Left cardiac atrium (tissue), 4 donors: ENCODE measurements at regions of chr3 and their contacts with region 1.

Region 1: GRCh38 chr3:185824476-185825378 is at the start of gene IGF2BP2:
- DNase-seq: peak; percentile 74
- ATAC-seq: peak; percentile 81 to 87
- total RNA-seq, gene IGF2BP2: 12.8 to 14.2 TPM

Region 2: DNA sequence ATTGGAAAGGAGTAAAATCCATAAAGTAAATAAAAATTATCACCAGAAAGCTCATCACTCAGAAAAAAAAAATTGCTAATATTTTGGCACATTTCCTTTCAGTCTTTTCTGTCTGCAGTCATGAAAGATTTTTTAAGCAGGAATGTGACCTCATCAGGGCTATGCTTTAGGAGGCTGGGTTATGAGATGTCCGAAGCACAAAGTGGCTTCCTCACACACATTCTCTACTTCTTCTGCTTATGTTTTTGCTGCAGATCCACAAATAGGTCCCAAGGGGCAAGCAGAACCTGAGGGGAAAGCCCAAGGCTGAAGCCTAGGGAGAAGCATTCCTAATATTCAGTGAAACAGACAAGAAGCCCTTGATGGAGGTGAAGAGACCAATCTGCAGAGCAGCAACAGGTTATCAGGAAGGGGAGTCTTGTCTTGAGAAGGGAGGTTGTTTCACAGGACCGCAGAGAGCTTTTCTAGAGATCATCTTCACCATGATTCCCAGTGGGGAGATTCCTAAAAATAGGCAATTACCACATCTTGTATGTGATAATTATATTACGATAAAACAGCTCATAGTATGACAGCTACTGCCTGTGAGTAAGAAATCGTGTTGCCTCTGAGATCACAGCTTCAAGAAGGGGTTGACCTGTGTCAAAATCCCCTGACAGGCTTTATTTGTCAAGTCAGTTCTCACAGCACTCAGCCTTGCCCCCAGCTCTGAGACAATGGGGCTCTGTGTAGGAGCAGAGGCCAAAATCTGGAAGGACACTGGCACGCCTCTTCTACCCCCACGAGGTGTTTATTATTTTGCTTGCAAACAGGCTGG is 60.4 kb before region 1 on chr3:
- intact Hi-C with region 1: no loop called
- DNase-seq: no peak
- ATAC-seq: peak; percentile 44 to 82

Region 3: DNA sequence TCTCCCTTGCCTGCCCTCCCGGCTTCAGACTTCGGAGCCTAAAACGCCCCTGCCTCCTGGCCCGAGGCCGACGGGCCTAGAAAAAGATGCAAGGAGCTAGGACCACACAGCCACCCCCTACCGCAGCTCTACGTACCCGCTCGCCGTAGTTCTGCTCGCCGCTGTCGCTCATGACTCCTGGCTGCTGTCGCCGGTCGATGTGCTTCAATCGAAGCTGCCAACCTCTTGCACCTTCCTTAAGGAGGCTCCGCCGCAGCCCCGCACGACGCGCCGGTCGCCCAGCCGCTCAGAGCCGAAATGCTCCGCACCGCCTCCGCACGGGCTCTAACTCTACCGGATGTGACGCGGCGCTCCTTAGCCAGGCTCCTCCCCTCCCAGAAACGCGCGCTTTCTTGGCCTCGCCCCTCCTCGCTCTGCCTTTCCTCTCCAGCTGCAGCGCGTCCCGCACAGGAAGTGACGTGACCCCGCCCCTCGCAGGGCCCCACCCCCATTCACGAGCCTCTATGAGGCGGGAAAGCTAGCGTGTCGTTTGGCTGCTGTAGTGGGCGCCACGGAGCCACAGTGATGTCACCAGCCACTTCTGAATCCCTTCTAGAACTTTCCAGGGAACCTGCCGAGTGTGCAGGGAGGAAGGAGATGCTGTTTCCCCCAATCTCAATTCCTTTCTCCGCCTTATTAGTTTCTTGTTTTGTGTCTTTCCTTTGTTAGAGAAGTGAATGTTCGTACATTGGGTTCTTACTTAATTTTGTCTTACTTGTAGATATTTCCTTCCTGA is 113.1 kb after region 1 on chr3 and contains the start of gene TRA2B:
- intact Hi-C with region 1: loop called in 1 of 2 experiments (anchors 10 kb)
- DNase-seq: peak; percentile 99
- ATAC-seq: peak; percentile 99
- total RNA-seq, gene TRA2B: 56.3 to 71.8 TPM

Region 4: DNA sequence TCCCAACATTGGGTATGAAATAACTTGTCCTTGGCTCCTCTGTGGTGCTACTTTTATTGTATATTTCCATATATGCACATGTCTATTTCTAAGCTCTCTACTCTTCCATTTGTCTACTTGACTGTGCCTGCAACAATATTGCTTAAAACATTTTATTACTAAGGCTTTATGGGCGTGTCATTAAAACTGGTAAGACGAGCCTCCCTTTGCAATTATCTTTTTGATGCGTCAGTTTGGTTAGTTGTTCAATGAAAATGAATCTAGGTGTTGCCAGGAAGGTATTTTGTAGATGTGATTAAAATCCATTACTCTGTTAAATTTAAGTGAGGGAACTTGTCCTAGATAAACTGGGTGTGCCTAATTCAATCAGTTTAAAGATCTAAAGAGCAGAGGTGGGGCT is 126.0 kb after region 1 on chr3:
- intact Hi-C with region 1: no loop called
- DNase-seq: no peak
- ATAC-seq: no peak